Esophagus muscularis mucosa (tissue), 4 donors: ENCODE measurements at regions of chr1 and their contacts with region 1.

Region 1: GRCh38 chr1:19439464-19440171 is 45.7 kb downstream of the CAPZB start:
- DNase-seq: no peak
- H3K4me3 ChIP-seq: no peak overlapping the region
- H3K27ac ChIP-seq: peak overlapping the region; percentile 88 to 97 (median 92)
- H3K4me1 ChIP-seq: peaks cover 97 to 100% (median 100%) of the 10 kb centered on the region in 4 donors
- H3K27me3 ChIP-seq: no peaks in the 10 kb centered on the region
- CTCF ChIP-seq: peak; percentile 28 to 41 (median 41)
- EP300 ChIP-seq: peak; percentile 31
- POLR2A ChIP-seq: no peak

Region 2: GRCh38 chr1:19485362-19486187 is 46.0 kb after region 1 on chr1 and contains the start of gene CAPZB:
- intact Hi-C with region 1: loop called (anchors 5 kb)
- DNase-seq: peak; percentile 97
- H3K4me3 ChIP-seq: peak within 1 kb of the TSS; percentile 96 to 100 (median 100)
- H3K27ac ChIP-seq: peak within 1 kb of the TSS; percentile 100
- H3K4me1 ChIP-seq: peaks cover 59 to 70% (median 65%) of the 10 kb centered on the region in 4 donors
- H3K27me3 ChIP-seq: no peaks in the 10 kb centered on the region
- CTCF ChIP-seq: no peak
- EP300 ChIP-seq: no peak
- POLR2A ChIP-seq: peak; percentile 83
- total RNA-seq, gene CAPZB: 186 to 261 (median 203) TPM